Lower leg skin (tissue), 4 donors: ENCODE measurements at regions of chr7 and their contacts with region 1.

Region 1: GRCh38 chr7:26365077-26365900 is 73.6 kb downstream of the SNX10 start:
- DNase-seq: peak in 1 of 2 donors; percentile 68
- H3K4me3 ChIP-seq: no peak overlapping the region
- CTCF ChIP-seq: peak in 1 of 3 donors; percentile 51
- POLR2A ChIP-seq: no peak

Region 2: GRCh38 chr7:26083113-26083512 is 282.2 kb before region 1 on chr7:
- intact Hi-C with region 1: loop called (anchors 10 kb)
- DNase-seq: no peak
- H3K4me3 ChIP-seq: no peak overlapping the region
- CTCF ChIP-seq: no peak
- POLR2A ChIP-seq: no peak